ENCODE measurements at regions of chr7 and their contacts with region 1.

Region 1: DNA sequence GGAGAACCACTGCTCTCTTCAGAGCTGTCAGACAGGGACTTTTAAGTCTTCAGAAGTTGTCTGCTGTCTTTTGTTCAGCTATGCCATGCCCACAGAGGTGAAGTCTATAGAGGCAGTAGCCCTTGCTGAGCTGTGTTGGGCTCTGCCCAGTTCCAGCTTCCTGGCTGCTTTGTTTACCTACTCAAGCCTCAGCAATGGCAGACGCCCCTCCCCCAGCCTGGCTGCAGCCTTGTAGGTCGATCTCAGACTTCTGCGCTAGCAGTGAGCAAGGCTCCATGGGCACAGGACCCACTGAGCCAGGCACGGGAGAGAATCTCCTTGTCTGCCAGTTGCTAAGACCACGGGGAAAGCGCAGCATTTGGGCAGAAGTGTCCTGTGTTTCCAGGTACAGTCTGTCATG is 12.1 kb upstream of the CPA2 start:
- DNase-seq: no peak

Region 2: DNA sequence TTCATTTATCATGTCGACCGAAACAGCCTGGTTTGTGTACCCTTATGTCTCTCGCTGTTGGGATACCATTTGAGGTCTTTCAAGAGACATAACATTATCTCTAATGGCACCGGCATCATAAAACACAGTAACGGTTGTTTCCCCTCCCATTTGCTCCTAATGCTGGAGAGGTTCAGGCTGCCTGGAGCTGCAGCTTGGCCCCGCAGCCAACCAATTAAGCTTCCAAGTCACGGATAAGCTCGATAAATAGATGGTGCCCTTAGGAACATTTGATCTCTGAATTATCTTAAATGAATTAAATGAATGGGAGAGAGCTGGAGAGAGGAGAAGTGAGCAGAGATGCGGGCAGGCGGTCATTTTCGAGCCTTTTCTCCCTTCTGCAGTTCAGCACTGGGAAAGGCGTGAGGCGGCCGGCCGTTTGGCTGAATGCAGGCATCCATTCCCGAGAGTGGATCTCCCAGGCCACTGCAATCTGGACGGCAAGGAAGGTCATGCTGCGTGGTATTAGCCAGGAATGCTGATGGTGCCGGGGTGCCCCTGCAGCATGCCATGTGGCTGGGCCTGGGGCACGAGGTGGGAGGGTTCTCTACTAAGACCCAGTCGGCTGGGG is 51.0 kb after region 1 on chr7:
- intact Hi-C with region 1: loop called in 1 of 2 experiments (anchors 2 kb)
- DNase-seq: no peak

Region 3: DNA sequence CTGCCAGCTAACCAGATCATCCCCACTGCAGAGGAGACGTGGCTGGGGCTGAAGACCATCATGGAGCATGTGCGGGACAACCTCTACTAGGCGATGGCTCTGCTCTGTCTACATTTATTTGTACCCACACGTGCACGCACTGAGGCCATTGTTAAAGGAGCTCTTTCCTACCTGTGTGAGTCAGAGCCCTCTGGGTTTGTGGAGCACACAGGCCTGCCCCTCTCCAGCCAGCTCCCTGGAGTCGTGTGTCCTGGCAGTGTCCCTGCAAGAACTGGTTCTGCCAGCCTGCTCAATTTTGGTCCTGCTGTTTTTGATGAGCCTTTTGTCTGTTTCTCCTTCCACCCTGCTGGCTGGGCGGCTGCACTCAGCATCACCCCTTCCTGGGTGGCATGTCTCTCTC is 68.0 kb after region 1 on chr7:
- intact Hi-C with region 1: loop called in 1 of 2 experiments (anchors 2 kb)
- DNase-seq: no peak

Measured in posterior vena cava (tissue), 2 donors.